Breast epithelium (tissue), 4 donors: ENCODE measurements at regions of chr1 and their contacts with region 1.

Region 1: GRCh38 chr1:149903836-149904491 is 4.6 kb downstream of the BOLA1 start:
- DNase-seq: no peak
- H3K4me3 ChIP-seq: no peak overlapping the region
- H3K27ac ChIP-seq: no peak overlapping the region
- H3K4me1 ChIP-seq: peaks cover 0 to 4% of the 10 kb centered on the region in 2 donors
- H3K27me3 ChIP-seq: no peaks in the 10 kb centered on the region
- CTCF ChIP-seq: no peak
- POLR2A ChIP-seq: no peak

Region 2: GRCh38 chr1:149886396-149887195 is 17.4 kb before region 1 on chr1:
- intact Hi-C with region 1: no loop called
- DNase-seq: peak; percentile 81 to 97
- H3K4me3 ChIP-seq: peak overlapping the region; percentile 69 to 83 (median 78)
- H3K27ac ChIP-seq: peak overlapping the region; percentile 99 to 100
- H3K4me1 ChIP-seq: peaks cover 0 to 13% of the 10 kb centered on the region in 2 donors
- H3K27me3 ChIP-seq: no peaks in the 10 kb centered on the region
- CTCF ChIP-seq: peak in 2 of 3 donors; percentile 8 to 31
- POLR2A ChIP-seq: peak; percentile 99

Region 3: GRCh38 chr1:149945206-149945605 is 41.2 kb after region 1 on chr1:
- intact Hi-C with region 1: loop called (anchors 1 kb)
- DNase-seq: no peak
- H3K4me3 ChIP-seq: no peak overlapping the region
- H3K27ac ChIP-seq: no peak overlapping the region
- H3K4me1 ChIP-seq: no peaks in the 10 kb centered on the region
- H3K27me3 ChIP-seq: no peaks in the 10 kb centered on the region
- CTCF ChIP-seq: no peak
- POLR2A ChIP-seq: no peak